CD4-positive, alpha-beta T cell (primary cell): ENCODE measurements at regions of chr21 and their contacts with region 1.

Region 1: DNA sequence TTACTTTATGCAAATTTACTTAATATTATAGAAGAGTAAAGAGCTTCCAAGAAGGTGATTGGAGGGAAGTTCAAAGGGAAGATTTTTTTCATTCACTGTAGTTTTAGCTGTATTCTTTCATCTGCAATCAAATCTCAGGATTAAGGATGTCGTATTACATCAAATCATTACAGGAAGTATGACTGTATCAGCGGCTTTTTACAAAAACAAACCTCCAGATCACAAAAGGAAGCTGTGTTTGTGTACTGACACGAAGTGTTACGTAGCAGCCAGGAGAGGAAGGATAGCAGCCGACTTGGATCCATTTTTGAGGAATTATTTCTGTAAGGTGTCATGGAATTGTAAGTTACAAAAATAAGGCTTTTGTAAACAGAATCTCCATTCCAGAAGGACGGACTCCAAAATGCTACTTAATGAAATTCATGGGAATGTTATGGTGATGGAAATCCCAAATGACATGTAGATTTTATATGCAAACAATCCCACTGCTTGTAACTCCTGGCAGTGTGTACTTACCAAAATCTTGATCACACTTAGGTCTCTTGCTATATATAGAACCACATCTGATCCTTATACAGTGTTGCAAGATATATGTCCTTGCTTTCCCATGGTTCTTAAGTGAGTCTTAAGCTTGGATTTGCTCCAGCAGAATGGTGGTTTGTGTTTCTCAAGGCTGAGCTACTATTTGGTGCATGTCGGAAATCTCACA is 49.8 kb downstream of the KCNJ15 start:
- DNase-seq: peak in 4 of 14 experiments; percentile 19 to 73 (median 56)
- ATAC-seq: peak; percentile 86
- H3K4me3 ChIP-seq: no peak overlapping the region
- H3K4me3 Mint-ChIP-seq: peak overlapping the region; percentile 9
- H3K27ac ChIP-seq: no peak overlapping the region
- H3K27ac Mint-ChIP-seq: peak overlapping the region; percentile 86
- H3K4me1 ChIP-seq: no peaks in the 10 kb centered on the region
- H3K4me1 Mint-ChIP-seq: peaks cover 25% of the 10 kb centered on the region
- H3K27me3 ChIP-seq: no peaks in the 10 kb centered on the region
- H3K27me3 Mint-ChIP-seq: no peaks in the 10 kb centered on the region
- CTCF ChIP-seq: no peak

Region 2: GRCh38 chr21:38244885-38245545 is 61.6 kb before region 1 on chr21:
- CTCF ChIA-PET with region 1: no interaction called
- POLR2A ChIA-PET with region 1: no interaction called
- intact Hi-C with region 1: loop called in 1 of 2 experiments (anchors 1 kb)
- DNase-seq: peak; percentile 26 to 85 (median 56)
- ATAC-seq: peak; percentile 94
- H3K4me3 ChIP-seq: no peak overlapping the region
- H3K4me3 Mint-ChIP-seq: peak overlapping the region; percentile 1
- H3K27ac ChIP-seq: no peak overlapping the region
- H3K27ac Mint-ChIP-seq: peak overlapping the region; percentile 73
- H3K4me1 ChIP-seq: peaks cover 13% of the 10 kb centered on the region
- H3K4me1 Mint-ChIP-seq: peaks cover 20% of the 10 kb centered on the region
- H3K27me3 ChIP-seq: no peaks in the 10 kb centered on the region
- H3K27me3 Mint-ChIP-seq: no peaks in the 10 kb centered on the region
- CTCF ChIP-seq: no peak

Region 3: DNA sequence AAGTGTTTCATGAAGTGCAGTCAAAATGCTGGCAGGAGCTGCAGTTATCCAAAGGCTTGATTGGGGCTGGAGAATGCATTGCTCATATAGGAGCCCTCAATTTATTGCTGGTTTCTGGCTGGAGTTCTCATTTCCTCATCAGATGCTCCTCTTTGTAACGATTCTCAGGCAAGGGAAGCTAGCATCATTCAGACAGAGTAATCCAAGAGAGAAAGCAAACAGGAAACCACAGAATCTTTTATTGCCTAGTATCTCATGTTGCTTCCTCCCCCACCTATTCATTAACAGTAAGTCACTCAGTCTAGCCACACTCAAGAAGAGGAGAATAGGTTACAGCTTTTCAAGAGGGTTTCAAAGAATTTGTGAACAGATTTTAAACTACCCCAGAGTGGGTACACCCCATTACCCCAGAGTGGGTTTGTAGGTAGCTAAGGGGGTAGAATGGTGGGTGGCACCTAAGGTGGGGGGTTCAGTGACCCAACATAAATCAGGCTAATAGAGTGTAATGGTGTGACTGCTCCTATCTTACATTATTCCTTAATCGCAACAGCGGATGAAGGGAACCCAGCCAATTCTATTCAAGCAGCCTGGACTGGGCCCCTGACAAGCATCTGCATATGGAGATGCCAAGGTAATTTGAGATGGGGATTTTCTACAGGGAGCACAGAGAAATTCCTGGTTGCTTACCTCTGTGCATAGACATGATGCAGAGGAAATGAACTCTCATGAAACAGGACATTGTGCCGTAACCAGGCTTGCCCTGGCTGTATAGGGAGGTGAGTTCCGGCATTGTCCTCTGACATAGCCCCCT is 17.3 kb after region 1 on chr21:
- CTCF ChIA-PET with region 1: interaction called, 4 read pairs
- POLR2A ChIA-PET with region 1: interaction called, 9 read pairs
- intact Hi-C with region 1: loop called (anchors 1 to 2 kb)
- DNase-seq: peak in 4 of 14 experiments; percentile 19 to 57 (median 48)
- ATAC-seq: peak; percentile 97
- H3K4me3 ChIP-seq: no peak overlapping the region
- H3K4me3 Mint-ChIP-seq: peak overlapping the region; percentile 34
- H3K27ac ChIP-seq: peak overlapping the region; percentile 7 to 11
- H3K27ac Mint-ChIP-seq: peak overlapping the region; percentile 76
- H3K4me1 ChIP-seq: peaks cover 21% of the 10 kb centered on the region
- H3K4me1 Mint-ChIP-seq: peaks cover 37% of the 10 kb centered on the region
- H3K27me3 ChIP-seq: no peaks in the 10 kb centered on the region
- H3K27me3 Mint-ChIP-seq: no peaks in the 10 kb centered on the region
- CTCF ChIP-seq: no peak

Region 4: DNA sequence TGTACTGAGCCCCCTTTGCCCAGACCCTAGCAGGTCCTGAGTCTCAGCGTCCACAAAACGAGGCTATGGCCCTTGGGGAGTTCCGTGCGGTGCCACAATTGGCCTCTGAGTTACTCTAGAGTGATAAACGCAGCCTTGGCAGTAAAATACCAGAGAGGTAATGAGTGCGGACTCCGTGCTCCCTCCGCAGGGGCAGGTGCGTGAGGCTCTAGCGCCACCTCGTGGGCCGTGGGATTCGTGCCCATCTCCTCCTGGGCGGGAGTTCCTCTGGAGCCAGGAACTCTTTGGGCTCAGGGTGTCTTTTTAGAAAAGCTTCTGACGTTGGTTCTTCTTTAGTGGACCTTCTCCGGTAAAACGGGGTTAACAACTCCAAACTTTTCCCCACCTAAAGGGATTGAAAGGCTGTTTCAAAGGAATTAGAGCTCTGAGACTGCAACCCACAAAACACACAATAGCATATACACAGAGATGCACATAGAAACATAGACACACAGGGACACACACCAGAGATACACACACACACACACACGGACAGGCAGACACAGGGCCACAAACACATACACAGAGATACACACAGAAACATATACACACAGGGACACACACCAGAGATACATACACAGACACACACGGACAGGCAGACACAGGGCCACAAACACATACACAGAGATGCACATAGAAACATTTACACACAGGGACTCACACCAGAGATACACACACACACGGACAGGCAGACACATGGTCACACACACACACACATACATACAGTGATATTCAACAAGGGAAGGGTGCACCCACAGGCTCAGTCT is 49.6 kb after region 1 on chr21:
- CTCF ChIA-PET with region 1: no interaction called
- POLR2A ChIA-PET with region 1: no interaction called
- intact Hi-C with region 1: no loop called
- DNase-seq: peak; percentile 49 to 83 (median 68)
- ATAC-seq: peak; percentile 76
- H3K4me3 ChIP-seq: no peak overlapping the region
- H3K4me3 Mint-ChIP-seq: no peak overlapping the region
- H3K27ac ChIP-seq: no peak overlapping the region
- H3K27ac Mint-ChIP-seq: no peak overlapping the region
- H3K4me1 ChIP-seq: peaks cover 12% of the 10 kb centered on the region
- H3K4me1 Mint-ChIP-seq: peaks cover 14% of the 10 kb centered on the region
- H3K27me3 ChIP-seq: no peaks in the 10 kb centered on the region
- H3K27me3 Mint-ChIP-seq: peaks cover 6% of the 10 kb centered on the region
- CTCF ChIP-seq: peak; percentile 85

Region 5: GRCh38 chr21:38965909-38966504 is 659.4 kb after region 1 on chr21:
- CTCF ChIA-PET with region 1: no interaction called
- POLR2A ChIA-PET with region 1: no interaction called
- intact Hi-C with region 1: no loop called
- DNase-seq: no peak
- ATAC-seq: no peak
- H3K4me3 ChIP-seq: no peak overlapping the region
- H3K4me3 Mint-ChIP-seq: no peak overlapping the region
- H3K27ac ChIP-seq: no peak overlapping the region
- H3K27ac Mint-ChIP-seq: no peak overlapping the region
- H3K4me1 ChIP-seq: no peaks in the 10 kb centered on the region
- H3K4me1 Mint-ChIP-seq: no peaks in the 10 kb centered on the region
- H3K27me3 ChIP-seq: no peaks in the 10 kb centered on the region
- H3K27me3 Mint-ChIP-seq: no peaks in the 10 kb centered on the region
- CTCF ChIP-seq: no peak